Calu3 (cell line): ENCODE measurements at regions of chr10 and their contacts with region 1.

Region 1: DNA sequence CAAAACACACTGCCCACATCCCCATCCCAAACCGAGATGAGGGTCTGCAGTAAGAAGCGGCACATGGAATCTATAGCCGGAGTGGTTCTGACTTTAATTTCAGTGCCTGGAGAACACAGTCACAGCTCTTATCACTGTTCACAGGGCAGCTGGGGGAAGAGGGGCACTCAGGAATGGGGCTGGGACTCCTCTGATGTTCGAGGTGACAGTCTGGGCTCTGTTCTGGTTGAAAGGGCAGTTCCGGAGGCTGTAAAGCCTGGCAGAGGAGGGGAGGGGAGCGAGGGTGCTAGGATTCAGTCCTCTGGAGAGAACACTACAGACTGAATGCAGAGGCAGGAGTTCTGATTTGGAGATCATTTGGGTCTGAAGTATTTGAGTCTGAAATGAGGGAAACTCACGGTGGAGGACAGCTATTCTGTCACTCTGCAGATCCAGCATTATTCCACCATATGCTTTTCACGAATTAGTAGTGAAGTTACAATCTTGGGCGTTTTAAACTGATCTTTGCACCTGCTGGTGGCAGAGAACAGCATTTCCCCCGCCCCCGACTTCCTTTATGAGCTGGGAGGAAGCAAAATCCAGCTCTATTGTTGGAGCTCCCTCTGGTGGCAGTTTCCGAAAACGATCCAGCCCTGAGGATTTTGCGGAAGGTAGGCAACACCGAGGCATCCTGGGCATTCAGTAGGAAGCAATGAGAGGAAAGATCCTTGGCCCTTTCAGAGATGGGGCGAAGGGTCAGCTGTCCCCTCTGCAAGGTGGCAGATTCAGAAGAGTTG is 22.7 kb upstream of the KCNK18 start:
- DNase-seq: peak; percentile 83
- H3K4me3 Mint-ChIP-seq: peak overlapping the region; percentile 70
- H3K27ac Mint-ChIP-seq: no peak overlapping the region
- H3K4me1 Mint-ChIP-seq: no peaks in the 10 kb centered on the region
- H3K27me3 Mint-ChIP-seq: peaks cover 35% of the 10 kb centered on the region
- CTCF ChIP-seq: peak; percentile 42

Region 2: GRCh38 chr10:116589926-116590325 is 584.7 kb before region 1 on chr10:
- CTCF ChIA-PET with region 1: no interaction called
- intact Hi-C with region 1: no loop called
- DNase-seq: no peak
- H3K4me3 Mint-ChIP-seq: no peak overlapping the region
- H3K27ac Mint-ChIP-seq: no peak overlapping the region
- H3K4me1 Mint-ChIP-seq: no peaks in the 10 kb centered on the region
- H3K27me3 Mint-ChIP-seq: no peaks in the 10 kb centered on the region
- CTCF ChIP-seq: no peak

Region 3: GRCh38 chr10:116627386-116627933 is 547.2 kb before region 1 on chr10:
- CTCF ChIA-PET with region 1: interaction called, 12 read pairs
- intact Hi-C with region 1: loop called (anchors 10 kb)
- DNase-seq: peak; percentile 63
- H3K4me3 Mint-ChIP-seq: no peak overlapping the region
- H3K27ac Mint-ChIP-seq: no peak overlapping the region
- H3K4me1 Mint-ChIP-seq: no peaks in the 10 kb centered on the region
- H3K27me3 Mint-ChIP-seq: peaks cover 46% of the 10 kb centered on the region
- CTCF ChIP-seq: peak; percentile 27

Region 4: GRCh38 chr10:116687633-116688032 is 487.0 kb before region 1 on chr10:
- CTCF ChIA-PET with region 1: interaction called, 3 read pairs
- intact Hi-C with region 1: loop called (anchors 1 kb)
- DNase-seq: no peak
- H3K4me3 Mint-ChIP-seq: no peak overlapping the region
- H3K27ac Mint-ChIP-seq: no peak overlapping the region
- H3K4me1 Mint-ChIP-seq: no peaks in the 10 kb centered on the region
- H3K27me3 Mint-ChIP-seq: peaks cover 16% of the 10 kb centered on the region
- CTCF ChIP-seq: no peak

Region 5: DNA sequence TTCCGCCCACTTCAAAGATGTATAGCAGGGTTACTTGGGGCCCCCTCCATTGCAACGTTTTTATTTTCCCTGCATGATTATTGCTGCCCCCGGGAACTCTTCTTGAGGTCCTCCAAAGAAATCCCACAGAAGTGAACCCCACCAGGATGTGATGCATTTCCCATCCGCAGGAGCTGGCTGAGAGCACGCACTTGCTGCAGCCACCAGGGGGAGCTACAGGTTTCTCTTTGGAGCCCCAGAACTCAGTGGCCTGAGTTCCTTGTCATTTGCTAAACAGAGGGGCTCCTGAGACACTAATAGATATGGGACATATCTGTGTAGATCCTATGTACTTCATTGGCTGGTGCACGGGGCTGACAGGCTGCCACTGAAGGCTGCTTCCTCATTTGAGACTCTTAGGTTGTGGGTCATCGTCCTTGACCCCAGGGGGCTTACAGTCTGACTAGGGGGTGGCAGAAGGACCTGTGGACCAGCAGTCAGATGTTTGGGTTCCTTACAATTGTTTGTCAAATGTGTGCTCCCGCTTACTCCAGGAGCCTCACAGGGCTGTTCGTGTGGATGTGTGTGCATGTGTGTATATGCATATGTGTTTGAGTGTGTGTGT is 377.6 kb before region 1 on chr10:
- CTCF ChIA-PET with region 1: interaction called, 46 read pairs
- intact Hi-C with region 1: loop called (anchors 1 kb)
- DNase-seq: peak; percentile 79
- H3K4me3 Mint-ChIP-seq: no peak overlapping the region
- H3K27ac Mint-ChIP-seq: no peak overlapping the region
- H3K4me1 Mint-ChIP-seq: no peaks in the 10 kb centered on the region
- H3K27me3 Mint-ChIP-seq: peaks cover 43% of the 10 kb centered on the region
- CTCF ChIP-seq: peak; percentile 76

Region 6: DNA sequence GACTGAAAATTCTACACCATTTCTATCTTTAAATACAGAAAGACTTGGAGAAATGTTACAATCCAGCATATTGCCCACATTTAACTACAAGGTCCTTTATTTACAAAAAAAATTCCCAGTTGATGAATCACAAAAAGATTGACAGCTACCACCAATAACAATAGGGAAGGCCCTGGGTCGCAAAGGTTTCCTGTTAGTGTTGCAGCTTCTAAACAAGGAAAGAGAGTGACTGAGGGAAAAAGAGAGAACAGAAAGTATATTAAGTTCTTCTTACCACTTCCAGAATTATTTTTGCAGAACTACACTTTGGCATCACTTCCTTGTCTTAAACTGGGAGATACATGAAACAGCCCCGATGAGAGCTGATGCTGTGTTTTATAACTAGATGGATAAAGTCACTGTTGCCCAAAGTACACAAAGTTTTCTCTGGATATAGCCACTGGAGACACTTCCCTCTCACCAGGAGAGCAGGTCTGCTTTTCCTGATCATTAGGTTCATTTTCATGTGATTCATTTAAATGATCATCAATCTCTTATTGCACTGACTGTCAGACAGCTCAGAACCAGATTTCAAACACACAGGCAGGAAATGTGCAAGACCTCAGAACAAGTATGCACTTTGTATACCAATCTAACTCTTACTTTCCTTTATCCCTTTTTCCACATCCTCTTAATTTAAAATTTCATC is 226.6 kb before region 1 on chr10:
- CTCF ChIA-PET with region 1: no interaction called
- intact Hi-C with region 1: loop called (anchors 5 kb)
- DNase-seq: peak; percentile 16
- H3K4me3 Mint-ChIP-seq: no peak overlapping the region
- H3K27ac Mint-ChIP-seq: peak overlapping the region; percentile 84
- H3K4me1 Mint-ChIP-seq: peaks cover 18% of the 10 kb centered on the region
- H3K27me3 Mint-ChIP-seq: no peaks in the 10 kb centered on the region
- CTCF ChIP-seq: no peak